Mammary epithelial cell (primary cell): ENCODE measurements at regions of chrX and their contacts with region 1.

Region 1: GRCh38 chrX:39840581-39841093 is 257.1 kb downstream of the BCOR start:
- DNase-seq: no peak
- H3K4me3 ChIP-seq: no peak overlapping the region
- H3K27ac ChIP-seq: no peak overlapping the region
- H3K4me1 ChIP-seq: no peaks in the 10 kb centered on the region
- H3K27me3 ChIP-seq: no peaks in the 10 kb centered on the region
- CTCF ChIP-seq: no peak

Region 2: GRCh38 chrX:39592776-39593175 is 247.9 kb before region 1 on chrX:
- CTCF ChIA-PET with region 1: no interaction called
- dilution Hi-C with region 1: no loop called
- in situ Hi-C with region 1: no loop called
- intact Hi-C with region 1: no loop called
- DNase-seq: peak; percentile 31
- H3K4me3 ChIP-seq: no peak overlapping the region
- H3K27ac ChIP-seq: no peak overlapping the region
- H3K4me1 ChIP-seq: no peaks in the 10 kb centered on the region
- H3K27me3 ChIP-seq: no peaks in the 10 kb centered on the region
- CTCF ChIP-seq: no peak

Region 3: GRCh38 chrX:39946822-39947221 is 106.2 kb after region 1 on chrX:
- CTCF ChIA-PET with region 1: no interaction called
- dilution Hi-C with region 1: loop called (anchors 5 kb)
- in situ Hi-C with region 1: no loop called
- intact Hi-C with region 1: no loop called
- DNase-seq: peak; percentile 25
- H3K4me3 ChIP-seq: no peak overlapping the region
- H3K27ac ChIP-seq: no peak overlapping the region
- H3K4me1 ChIP-seq: no peaks in the 10 kb centered on the region
- H3K27me3 ChIP-seq: no peaks in the 10 kb centered on the region
- CTCF ChIP-seq: no peak